Dorsolateral prefrontal cortex (tissue), 120 donors: ENCODE measurements at regions of chr12 and their contacts with region 1.

Region 1: GRCh38 chr12:42144408-42145196 is at the start of gene GXYLT1:
- DNase-seq: peak; percentile 60 to 92 (median 82)
- H3K4me3 ChIP-seq: peak within 1 kb of the TSS; percentile 57 to 92 (median 78)
- H3K27ac ChIP-seq: peak within 1 kb of the TSS in 58 of 59 donors; percentile 40 to 93 (median 79)
- H3K27me3 ChIP-seq: no peaks in the 10 kb centered on the region
- CTCF ChIP-seq: peak in 21 of 56 donors; percentile 6 to 57 (median 22)
- total RNA-seq, gene GXYLT1: 5.8 to 13.8 (median 9.8) TPM

Region 2: GRCh38 chr12:42237052-42237852 is 92.7 kb after region 1 on chr12:
- intact Hi-C with region 1: loop called (anchors 1 to 2 kb)
- DNase-seq: peak; percentile 44 to 71 (median 58)
- H3K4me3 ChIP-seq: peak overlapping the region; percentile 61 to 95 (median 86)
- H3K27ac ChIP-seq: peak overlapping the region in 58 of 59 donors; percentile 30 to 97 (median 87)
- H3K27me3 ChIP-seq: no peaks in the 10 kb centered on the region
- CTCF ChIP-seq: peak in 29 of 56 donors; percentile 7 to 55 (median 26)